ENCODE measurements at regions of chr5 and their contacts with region 1.

Region 1: GRCh38 chr5:132386644-132387286 is 17.3 kb downstream of the SLC22A5 start:
- DNase-seq: peak; percentile 88
- ATAC-seq: peak; percentile 87
- H3K4me3 Mint-ChIP-seq: no peak overlapping the region
- H3K27ac Mint-ChIP-seq: peak overlapping the region; percentile 29
- H3K4me1 Mint-ChIP-seq: peaks cover 40% of the 10 kb centered on the region
- H3K27me3 Mint-ChIP-seq: no peaks in the 10 kb centered on the region

Region 2: GRCh38 chr5:132369474-132370180 is 17.1 kb before region 1 on chr5 and contains the start of gene SLC22A5:
- CTCF ChIA-PET with region 1: interaction called, 14 read pairs
- POLR2A ChIA-PET with region 1: no interaction called
- intact Hi-C with region 1: no loop called
- DNase-seq: peak; percentile 84
- ATAC-seq: peak; percentile 97
- H3K4me3 Mint-ChIP-seq: peak within 1 kb of the TSS; percentile 66
- H3K27ac Mint-ChIP-seq: peak within 1 kb of the TSS; percentile 80
- H3K4me1 Mint-ChIP-seq: peaks cover 24% of the 10 kb centered on the region
- H3K27me3 Mint-ChIP-seq: no peaks in the 10 kb centered on the region
- total RNA-seq, gene SLC22A5: 3.7 to 4.9 TPM

Region 3: GRCh38 chr5:132419502-132420468 is 33.0 kb after region 1 on chr5:
- CTCF ChIA-PET with region 1: interaction called, 5 read pairs
- POLR2A ChIA-PET with region 1: no interaction called
- intact Hi-C with region 1: loop called in 1 of 2 experiments (anchors 2 kb)
- DNase-seq: peak; percentile 75
- ATAC-seq: peak; percentile 65
- H3K4me3 Mint-ChIP-seq: peak overlapping the region; percentile 37
- H3K27ac Mint-ChIP-seq: peak overlapping the region; percentile 90
- H3K4me1 Mint-ChIP-seq: peaks cover 83% of the 10 kb centered on the region
- H3K27me3 Mint-ChIP-seq: no peaks in the 10 kb centered on the region

Region 4: GRCh38 chr5:132466433-132467286 is 79.9 kb after region 1 on chr5:
- CTCF ChIA-PET with region 1: interaction called, 14 read pairs
- POLR2A ChIA-PET with region 1: no interaction called
- intact Hi-C with region 1: no loop called
- DNase-seq: peak; percentile 78
- ATAC-seq: peak; percentile 61
- H3K4me3 Mint-ChIP-seq: peak overlapping the region; percentile 51
- H3K27ac Mint-ChIP-seq: peak overlapping the region; percentile 51
- H3K4me1 Mint-ChIP-seq: peaks cover 88% of the 10 kb centered on the region
- H3K27me3 Mint-ChIP-seq: no peaks in the 10 kb centered on the region

Region 5: GRCh38 chr5:132526290-132526973 is 139.7 kb after region 1 on chr5:
- CTCF ChIA-PET with region 1: interaction called, 4 read pairs
- POLR2A ChIA-PET with region 1: no interaction called
- intact Hi-C with region 1: loop called in 1 of 2 experiments (anchors 1 kb)
- DNase-seq: peak; percentile 60
- ATAC-seq: peak; percentile 34
- H3K4me3 Mint-ChIP-seq: no peak overlapping the region
- H3K27ac Mint-ChIP-seq: no peak overlapping the region
- H3K4me1 Mint-ChIP-seq: peaks cover 39% of the 10 kb centered on the region
- H3K27me3 Mint-ChIP-seq: peaks cover 3% of the 10 kb centered on the region

Measured in activated CD4-positive, alpha-beta T cell treated with anti-CD3 and anti-CD28 coated beads for 36 hours (primary cell).